ENCODE measurements at regions of chr19 and their contacts with region 1.

Region 1: DNA sequence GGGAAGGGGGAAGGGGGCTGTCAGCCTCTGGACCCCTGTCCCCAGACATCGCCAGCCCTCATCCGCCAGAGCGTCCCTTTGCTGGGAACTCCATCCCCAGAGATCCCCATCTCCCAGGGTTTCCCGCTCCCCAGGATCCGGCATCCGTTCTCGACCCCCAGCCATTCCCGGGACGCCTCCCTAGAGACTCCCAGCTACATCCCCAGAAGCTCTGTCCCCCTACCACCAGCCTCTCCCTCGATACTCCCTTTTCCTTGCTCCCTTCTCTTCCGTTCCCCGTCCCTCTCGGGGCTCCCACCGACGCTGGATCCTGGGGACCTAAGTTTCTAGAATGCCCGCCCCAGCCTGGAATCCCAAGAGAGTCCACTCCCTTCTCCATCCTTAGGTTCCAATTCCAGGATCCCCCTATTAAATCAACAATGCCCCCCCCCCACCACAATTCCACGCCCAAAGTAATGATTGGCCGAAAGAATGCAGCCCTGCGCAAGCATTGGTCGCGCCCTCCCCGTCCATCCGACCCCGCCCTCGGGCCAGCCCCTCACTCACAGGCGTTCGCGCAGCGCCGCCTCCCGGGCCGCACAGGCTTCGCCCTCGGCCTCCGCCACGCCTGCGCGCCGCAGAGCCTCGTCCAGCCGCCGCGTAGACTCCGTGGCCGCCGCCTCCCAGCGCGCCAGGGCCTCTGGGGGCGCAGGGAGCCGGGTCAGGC is 3.2 kb downstream of the CCDC194 start:
- DNase-seq: peak; percentile 73 to 81
- H3K4me3 ChIP-seq: peak overlapping the region in 1 of 3 donors; percentile 32
- H3K27ac ChIP-seq: no peak overlapping the region
- H3K4me1 ChIP-seq: peaks cover 0 to 12% of the 10 kb centered on the region in 2 donors
- H3K27me3 ChIP-seq: peaks cover 3% of the 10 kb centered on the region
- CTCF ChIP-seq: peak in 4 of 6 experiments; percentile 19 to 69 (median 64)
- POLR2A ChIP-seq: no peak

Region 2: GRCh38 chr19:17292286-17293097 is 98.3 kb before region 1 on chr19:
- intact Hi-C with region 1: loop called (anchors 5 kb)
- DNase-seq: peak; percentile 41 to 54
- H3K4me3 ChIP-seq: peak overlapping the region in 1 of 3 donors; percentile 23
- H3K27ac ChIP-seq: peak overlapping the region in 1 of 3 donors; percentile 4
- H3K4me1 ChIP-seq: no peaks in the 10 kb centered on the region
- H3K27me3 ChIP-seq: no peaks in the 10 kb centered on the region
- CTCF ChIP-seq: peak in 5 of 6 experiments; percentile 21 to 49 (median 38)
- POLR2A ChIP-seq: no peak

Region 3: GRCh38 chr19:17346109-17346671 is 44.6 kb before region 1 on chr19:
- intact Hi-C with region 1: loop called (anchors 5 kb)
- DNase-seq: peak; percentile 60 to 68
- H3K4me3 ChIP-seq: no peak overlapping the region
- H3K27ac ChIP-seq: peak overlapping the region; percentile 35 to 65 (median 56)
- H3K4me1 ChIP-seq: peaks cover 0 to 20% of the 10 kb centered on the region in 2 donors
- H3K27me3 ChIP-seq: no peaks in the 10 kb centered on the region
- CTCF ChIP-seq: peak; percentile 80 to 96 (median 86)
- POLR2A ChIP-seq: no peak